ENCODE measurements at regions of chr19 and their contacts with region 1.

Region 1: DNA sequence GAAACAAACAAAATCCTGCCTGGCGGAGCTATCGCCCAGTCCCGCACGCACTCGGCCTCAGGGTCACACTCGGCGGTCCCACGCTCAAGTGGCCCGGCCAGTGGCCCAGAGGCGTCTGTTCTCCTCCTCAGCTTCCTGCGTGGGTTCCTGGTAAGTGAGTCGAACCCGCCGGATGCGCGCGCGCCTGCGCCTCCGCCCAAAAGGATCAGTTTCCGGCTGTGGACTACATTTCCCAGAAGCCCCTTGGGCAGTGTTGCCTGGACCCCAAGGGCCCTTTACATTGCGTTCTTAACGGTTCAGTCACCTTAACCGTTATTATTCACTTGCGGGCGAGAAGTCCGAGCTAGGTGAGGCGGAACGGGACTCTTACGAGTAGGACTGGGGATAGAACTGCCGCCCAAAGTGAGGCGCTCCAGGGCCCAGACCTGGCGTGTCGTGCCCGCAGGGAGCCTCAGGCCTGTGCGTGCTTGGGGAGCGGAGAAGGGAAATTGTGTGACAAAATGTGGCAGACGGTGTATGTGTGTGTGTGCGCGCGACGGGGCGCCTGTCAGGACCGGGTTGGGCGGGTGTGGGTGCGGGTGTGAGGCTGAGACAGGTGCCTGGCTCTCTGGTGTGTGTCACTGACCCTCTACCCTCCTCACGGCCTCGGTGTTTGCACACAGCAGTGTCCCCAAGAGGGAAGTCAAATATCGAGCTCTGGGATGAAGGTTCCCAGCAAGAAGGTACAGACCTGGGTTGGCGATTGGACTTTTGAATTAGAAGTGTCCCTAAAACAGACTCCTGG is at the start of gene ZNF546:
- DNase-seq: peak; percentile 78 to 94
- ATAC-seq: peak; percentile 84 to 94 (median 89)
- H3K4me3 ChIP-seq: peak within 1 kb of the TSS; percentile 83
- H3K4me3 Mint-ChIP-seq: peak within 1 kb of the TSS; percentile 91
- H3K27ac ChIP-seq: peak within 1 kb of the TSS; percentile 86
- H3K27ac Mint-ChIP-seq: peak within 1 kb of the TSS; percentile 88 to 91
- H3K4me1 ChIP-seq: peaks cover 21% of the 10 kb centered on the region
- H3K4me1 Mint-ChIP-seq: peaks cover 29 to 30% of the 10 kb centered on the region in 2 donors
- H3K27me3 ChIP-seq: no peaks in the 10 kb centered on the region
- H3K27me3 Mint-ChIP-seq: no peaks in the 10 kb centered on the region
- CTCF ChIP-seq: no peak
- total RNA-seq, gene ZNF546: 3.3 to 4.0 (median 3.8) TPM

Region 2: DNA sequence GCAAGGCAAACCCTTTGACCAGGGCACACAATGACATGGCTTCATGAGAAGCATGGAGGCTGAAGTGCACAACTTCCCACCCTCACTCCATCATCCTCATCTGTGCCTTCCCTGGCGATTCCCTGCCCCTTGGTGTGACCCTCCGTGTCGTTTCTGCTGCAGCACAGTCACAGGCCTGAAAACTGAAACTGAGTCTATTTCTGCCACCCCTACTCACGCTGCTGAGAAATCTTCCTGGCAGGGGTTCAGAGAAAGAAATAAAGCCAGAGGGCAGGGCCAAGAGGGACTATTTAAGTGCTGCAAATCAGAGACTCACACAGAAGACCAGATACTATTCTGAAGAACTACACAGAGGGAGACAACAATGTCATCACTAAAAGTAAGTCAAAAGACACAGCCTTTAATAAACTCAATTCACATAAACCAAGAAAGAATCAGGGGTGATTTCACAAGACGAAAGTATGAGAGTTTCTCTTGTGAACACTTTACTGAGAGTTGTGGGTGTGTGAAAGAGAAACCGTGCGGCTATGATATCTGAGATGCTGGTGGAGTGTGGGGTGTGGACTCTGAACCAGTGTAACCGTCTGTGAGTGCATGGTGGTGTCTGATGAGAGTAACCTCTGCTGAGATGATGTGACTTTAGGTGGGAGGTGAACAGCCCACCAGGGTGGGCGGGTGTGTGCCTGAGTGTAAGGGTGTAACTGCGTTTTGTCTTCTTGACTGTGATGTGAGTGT is 317.8 kb before region 1 on chr19:
- intact Hi-C with region 1: no loop called
- DNase-seq: peak in 1 of 2 donors; percentile 23
- ATAC-seq: peak in 1 of 3 donors; percentile 55
- H3K4me3 ChIP-seq: no peak overlapping the region
- H3K4me3 Mint-ChIP-seq: no peak overlapping the region
- H3K27ac ChIP-seq: no peak overlapping the region
- H3K27ac Mint-ChIP-seq: no peak overlapping the region
- H3K4me1 ChIP-seq: no peaks in the 10 kb centered on the region
- H3K4me1 Mint-ChIP-seq: no peaks in the 10 kb centered on the region
- H3K27me3 ChIP-seq: no peaks in the 10 kb centered on the region
- H3K27me3 Mint-ChIP-seq: peaks cover 9 to 22% of the 10 kb centered on the region in 2 donors
- CTCF ChIP-seq: no peak

Region 3: DNA sequence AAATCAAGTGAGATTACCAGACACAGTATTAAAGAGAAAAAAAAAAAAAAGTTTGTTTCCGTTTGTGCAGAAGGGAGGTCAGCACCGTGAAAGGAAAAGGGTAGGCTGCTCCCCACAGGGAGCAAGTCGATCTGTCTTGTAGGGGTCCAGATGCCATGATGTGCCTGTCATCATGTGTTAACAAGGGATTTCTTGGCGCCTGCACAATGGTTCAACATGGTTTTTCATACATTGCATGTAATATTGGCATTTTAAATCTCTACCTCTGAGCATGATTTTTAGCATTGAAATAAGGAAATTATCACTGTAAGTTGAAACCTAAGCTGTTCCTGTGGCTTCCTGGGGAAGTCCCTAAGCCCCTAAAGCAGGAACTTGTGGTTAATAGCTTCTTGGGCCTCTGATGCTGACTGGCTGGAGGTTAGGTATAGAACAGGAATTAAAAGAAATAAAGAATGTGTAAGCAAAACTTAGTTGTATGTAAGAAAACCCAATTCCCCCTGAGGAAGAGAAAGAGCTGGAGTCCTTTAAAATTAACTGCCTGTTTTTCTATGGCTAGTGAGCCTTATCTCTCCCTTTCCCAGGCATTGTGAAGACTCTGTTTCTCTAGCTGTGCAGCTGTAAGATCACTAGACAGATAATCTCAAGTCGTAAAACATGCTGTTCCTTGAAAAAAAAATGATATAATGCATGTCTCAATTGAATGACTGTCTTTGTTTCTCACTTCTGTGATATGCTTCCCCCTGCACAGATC is 55.2 kb before region 1 on chr19:
- intact Hi-C with region 1: loop called (anchors 2 kb)
- DNase-seq: peak; percentile 49 to 89
- ATAC-seq: peak; percentile 65 to 88 (median 84)
- H3K4me3 ChIP-seq: peak overlapping the region; percentile 24
- H3K4me3 Mint-ChIP-seq: peak overlapping the region; percentile 91
- H3K27ac ChIP-seq: peak overlapping the region; percentile 94
- H3K27ac Mint-ChIP-seq: peak overlapping the region; percentile 89 to 97
- H3K4me1 ChIP-seq: peaks cover 59% of the 10 kb centered on the region
- H3K4me1 Mint-ChIP-seq: peaks cover 64 to 71% of the 10 kb centered on the region in 2 donors
- H3K27me3 ChIP-seq: no peaks in the 10 kb centered on the region
- H3K27me3 Mint-ChIP-seq: no peaks in the 10 kb centered on the region
- CTCF ChIP-seq: no peak

Region 4: DNA sequence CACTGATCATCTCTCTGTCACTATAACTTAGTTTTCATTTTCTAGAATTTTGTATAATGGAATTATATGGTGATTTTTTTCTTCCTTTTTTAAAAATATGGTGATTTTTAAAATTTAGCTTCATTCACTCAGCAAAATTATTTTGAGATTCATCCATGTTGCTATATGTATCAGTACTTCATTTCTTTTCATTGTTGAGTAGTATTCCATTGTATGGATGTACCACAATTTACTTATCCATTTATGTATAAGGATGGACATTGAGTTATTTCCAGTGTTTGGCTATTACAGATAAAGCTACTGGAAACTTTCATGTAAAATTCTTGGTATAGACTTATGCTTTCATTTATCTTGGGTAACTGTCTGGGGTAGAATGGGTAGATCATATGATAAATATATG is 12.7 kb after region 1 on chr19:
- intact Hi-C with region 1: no loop called
- DNase-seq: no peak
- ATAC-seq: no peak
- H3K4me3 ChIP-seq: no peak overlapping the region
- H3K4me3 Mint-ChIP-seq: no peak overlapping the region
- H3K27ac ChIP-seq: no peak overlapping the region
- H3K27ac Mint-ChIP-seq: no peak overlapping the region
- H3K4me1 ChIP-seq: no peaks in the 10 kb centered on the region
- H3K4me1 Mint-ChIP-seq: no peaks in the 10 kb centered on the region
- H3K27me3 ChIP-seq: no peaks in the 10 kb centered on the region
- H3K27me3 Mint-ChIP-seq: no peaks in the 10 kb centered on the region
- CTCF ChIP-seq: no peak

Region 5: GRCh38 chr19:40035996-40036395 is 39.0 kb after region 1 on chr19:
- intact Hi-C with region 1: no loop called
- DNase-seq: no peak
- ATAC-seq: no peak
- H3K4me3 ChIP-seq: no peak overlapping the region
- H3K4me3 Mint-ChIP-seq: no peak overlapping the region
- H3K27ac ChIP-seq: no peak overlapping the region
- H3K27ac Mint-ChIP-seq: no peak overlapping the region
- H3K4me1 ChIP-seq: no peaks in the 10 kb centered on the region
- H3K4me1 Mint-ChIP-seq: no peaks in the 10 kb centered on the region
- H3K27me3 ChIP-seq: no peaks in the 10 kb centered on the region
- H3K27me3 Mint-ChIP-seq: no peaks in the 10 kb centered on the region
- CTCF ChIP-seq: no peak

Region 6: GRCh38 chr19:40090241-40091204 is 93.5 kb after region 1 on chr19 and contains the start of gene ZNF780A:
- intact Hi-C with region 1: loop called (anchors 1 kb)
- DNase-seq: peak; percentile 71 to 85
- ATAC-seq: peak; percentile 88 to 95 (median 88)
- H3K4me3 ChIP-seq: peak within 1 kb of the TSS; percentile 86
- H3K4me3 Mint-ChIP-seq: peak within 1 kb of the TSS; percentile 100
- H3K27ac ChIP-seq: peak within 1 kb of the TSS; percentile 93
- H3K27ac Mint-ChIP-seq: peak within 1 kb of the TSS; percentile 99 to 100
- H3K4me1 ChIP-seq: peaks cover 5% of the 10 kb centered on the region
- H3K4me1 Mint-ChIP-seq: peaks cover 43 to 49% of the 10 kb centered on the region in 2 donors
- H3K27me3 ChIP-seq: no peaks in the 10 kb centered on the region
- H3K27me3 Mint-ChIP-seq: peaks cover 5 to 8% of the 10 kb centered on the region in 2 donors
- CTCF ChIP-seq: no peak
- total RNA-seq, gene ZNF780A: 15.1 to 17.0 (median 16.0) TPM

Measured in natural killer cell (primary cell).